Psoas muscle (tissue), 8 donors: ENCODE measurements at regions of chr1 and their contacts with region 1.

Region 1: DNA sequence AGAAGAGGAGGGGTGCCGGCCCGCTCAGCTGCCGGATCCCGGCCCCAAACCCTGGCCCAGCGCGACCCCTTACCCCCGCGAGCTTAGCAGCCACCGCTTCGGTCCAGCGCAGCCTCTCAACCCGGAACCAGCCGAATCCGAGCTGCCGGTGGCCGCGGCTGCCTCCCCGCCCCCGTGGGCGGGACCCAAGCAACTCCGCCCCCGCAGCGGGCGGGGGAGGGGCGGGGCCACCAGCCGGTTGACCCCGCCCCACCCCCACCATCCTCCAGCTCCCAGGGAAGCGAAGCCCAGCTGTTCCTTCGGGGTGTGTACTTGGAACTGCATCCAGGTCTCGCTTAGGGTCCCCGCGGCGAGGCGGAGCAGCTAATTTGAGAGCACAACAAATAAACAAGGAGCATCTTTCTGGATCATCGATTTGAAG is at the start of gene TRIM62:
- DNase-seq: peak; percentile 90 to 93
- ATAC-seq: peak; percentile 84 to 94 (median 87)
- H3K4me3 ChIP-seq: peak within 1 kb of the TSS; percentile 88
- H3K27ac ChIP-seq: peak within 1 kb of the TSS; percentile 84
- H3K4me1 ChIP-seq: peaks cover 15% of the 10 kb centered on the region
- H3K27me3 ChIP-seq: no peaks in the 10 kb centered on the region
- CTCF ChIP-seq: no peak
- total RNA-seq, gene TRIM62: 4.3 to 14.2 (median 9.4) TPM

Region 2: DNA sequence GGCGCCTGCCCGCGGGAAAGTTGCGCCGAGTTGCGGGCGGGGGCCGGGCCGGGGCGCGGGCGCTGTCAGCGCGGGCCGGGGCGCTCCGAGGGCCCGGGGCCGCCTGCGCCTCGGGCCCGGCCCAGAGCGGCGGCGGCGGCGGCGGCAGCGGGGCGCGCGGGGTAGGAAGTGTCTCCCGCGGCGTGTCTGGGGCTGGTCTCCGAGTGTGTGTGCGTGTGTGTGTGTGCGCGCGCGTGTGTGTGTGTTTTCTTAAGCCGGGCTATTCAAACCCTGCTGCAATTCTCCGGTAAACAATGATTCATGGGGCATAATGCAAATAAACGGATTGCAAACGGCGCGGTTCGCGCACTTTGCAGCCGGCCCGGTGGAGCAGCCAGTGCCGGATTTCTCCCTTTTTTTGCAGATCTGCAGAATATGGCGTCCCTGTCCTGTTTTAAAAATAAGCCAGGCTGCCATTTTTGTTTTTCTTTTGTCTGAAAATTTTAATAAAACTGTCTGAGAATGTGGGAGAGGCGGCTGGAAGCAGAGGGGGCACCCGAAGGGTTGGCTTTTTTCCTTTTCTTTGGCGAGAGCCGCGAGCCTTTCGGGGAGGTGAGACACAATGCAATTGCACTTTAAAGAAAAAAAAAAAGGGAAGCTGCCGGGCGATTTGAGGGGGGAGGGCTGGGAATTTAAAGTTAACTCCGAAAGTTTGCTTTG is 74.9 kb after region 1 on chr1:
- intact Hi-C with region 1: loop called in 1 of 2 experiments (anchors 5 kb)
- DNase-seq: peak; percentile 61 to 74
- ATAC-seq: peak; percentile 39 to 57 (median 49)
- H3K4me3 ChIP-seq: peak overlapping the region; percentile 81
- H3K27ac ChIP-seq: peak overlapping the region; percentile 72
- H3K4me1 ChIP-seq: peaks cover 40% of the 10 kb centered on the region
- H3K27me3 ChIP-seq: no peaks in the 10 kb centered on the region
- CTCF ChIP-seq: no peak

Region 3: GRCh38 chr1:33349778-33350610 is 168.1 kb after region 1 on chr1:
- intact Hi-C with region 1: loop called in 1 of 2 experiments (anchors 5 kb)
- DNase-seq: peak; percentile 92 to 95
- ATAC-seq: peak; percentile 72 to 81 (median 79)
- H3K4me3 ChIP-seq: peak overlapping the region; percentile 85
- H3K27ac ChIP-seq: peak overlapping the region; percentile 98
- H3K4me1 ChIP-seq: peaks cover 35% of the 10 kb centered on the region
- H3K27me3 ChIP-seq: no peaks in the 10 kb centered on the region
- CTCF ChIP-seq: no peak